HCT116 (cell line): ENCODE measurements at regions of chr7 and their contacts with region 1.

Region 1: GRCh38 chr7:65892835-65893234 is 20.0 kb downstream of the VKORC1L1 start:
- DNase-seq: no peak
- ATAC-seq: no peak
- H3K4me3 ChIP-seq: no peak overlapping the region
- H3K27ac ChIP-seq: no peak overlapping the region
- H3K4me1 ChIP-seq: peaks cover 0 to 4% of the 10 kb centered on the region in 2 experiments; a peak in 2 of 4 replicates
- H3K27me3 ChIP-seq: no peaks in the 10 kb centered on the region
- CTCF ChIP-seq: no peak
- POLR2A ChIP-seq: no peak
- RAD21 ChIP-seq: no peak

Region 2: DNA sequence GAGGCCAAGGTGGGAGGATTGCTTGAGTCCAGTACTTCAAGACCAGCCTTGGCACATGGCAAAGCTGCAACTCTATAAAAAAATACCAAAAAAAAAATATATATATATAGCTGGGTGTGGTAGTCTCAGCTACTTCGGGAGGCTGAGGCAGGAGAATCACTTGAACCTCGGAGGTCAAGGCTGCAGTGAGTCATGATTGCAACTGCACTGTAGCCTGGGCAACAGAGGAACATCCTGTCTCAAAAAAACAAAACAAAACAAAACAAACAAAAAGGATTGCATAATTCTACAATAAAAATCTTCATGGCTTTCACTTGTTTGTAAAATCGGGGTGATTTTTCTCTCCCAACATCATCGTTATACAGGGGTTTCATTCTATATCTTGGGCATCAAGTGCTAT is 54.1 kb after region 1 on chr7:
- CTCF ChIA-PET with region 1: no interaction called
- POLR2A ChIA-PET with region 1: no interaction called
- RAD21 ChIA-PET with region 1: no interaction called
- intact Hi-C with region 1: loop called (anchors 10 kb)
- DNase-seq: no peak
- ATAC-seq: no peak
- H3K4me3 ChIP-seq: no peak overlapping the region
- H3K27ac ChIP-seq: no peak overlapping the region
- H3K4me1 ChIP-seq: no peaks in the 10 kb centered on the region
- H3K27me3 ChIP-seq: no peaks in the 10 kb centered on the region
- CTCF ChIP-seq: no peak
- POLR2A ChIP-seq: no peak
- RAD21 ChIP-seq: no peak

Region 3: GRCh38 chr7:66505531-66506451 is 613.0 kb after region 1 on chr7:
- CTCF ChIA-PET with region 1: no interaction called
- POLR2A ChIA-PET with region 1: no interaction called
- RAD21 ChIA-PET with region 1: no interaction called
- intact Hi-C with region 1: no loop called
- DNase-seq: no peak
- ATAC-seq: no peak
- H3K4me3 ChIP-seq: no peak overlapping the region
- H3K27ac ChIP-seq: no peak overlapping the region
- H3K4me1 ChIP-seq: no peaks in the 10 kb centered on the region
- H3K27me3 ChIP-seq: no peaks in the 10 kb centered on the region
- CTCF ChIP-seq: no peak
- POLR2A ChIP-seq: no peak
- RAD21 ChIP-seq: no peak